MCF 10A (cell line): ENCODE measurements at regions of chr19 and their contacts with region 1.

Region 1: GRCh38 chr19:40777937-40778705 is at the start of gene RAB4B:
- DNase-seq: peak; percentile 100
- H3K4me3 Mint-ChIP-seq: peak within 1 kb of the TSS; percentile 83
- H3K27ac Mint-ChIP-seq: peak within 1 kb of the TSS; percentile 86
- H3K4me1 Mint-ChIP-seq: peaks cover 25% of the 10 kb centered on the region
- H3K27me3 Mint-ChIP-seq: no peaks in the 10 kb centered on the region
- CTCF ChIP-seq: no peak
- total RNA-seq, gene RAB4B: 10.1 and 13.2 TPM in 2 replicates

Region 2: DNA sequence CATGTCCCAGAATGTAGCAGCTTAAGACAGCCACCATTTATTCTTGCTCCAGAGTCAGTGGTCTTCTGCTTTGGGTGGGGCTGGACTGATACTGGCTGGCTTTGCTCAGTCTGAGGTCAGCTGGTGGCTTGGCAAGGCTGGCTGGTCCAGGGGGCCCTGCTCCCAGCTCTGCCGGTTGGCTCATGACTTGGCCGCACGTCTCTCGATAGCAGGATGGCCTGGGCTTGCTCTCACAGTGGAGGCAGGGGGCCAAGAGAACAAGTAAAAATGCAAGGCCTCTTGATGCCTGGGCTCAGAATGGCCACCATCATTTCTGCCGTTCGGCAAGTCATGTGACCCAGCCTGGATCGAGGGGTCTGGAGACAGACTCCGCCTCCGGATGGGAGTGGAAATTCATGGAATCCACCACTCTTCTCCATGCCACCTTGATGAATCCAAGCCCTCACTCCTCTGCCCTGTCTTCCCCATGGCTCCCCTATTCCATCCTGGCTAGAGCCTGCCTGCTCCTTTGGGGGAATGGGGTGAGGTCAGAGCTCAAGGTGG is 40.9 kb before region 1 on chr19:
- CTCF ChIA-PET with region 1: no interaction called
- POLR2A ChIA-PET with region 1: no interaction called
- intact Hi-C with region 1: no loop called
- DNase-seq: no peak
- H3K4me3 Mint-ChIP-seq: no peak overlapping the region
- H3K27ac Mint-ChIP-seq: no peak overlapping the region
- H3K4me1 Mint-ChIP-seq: peaks cover 7% of the 10 kb centered on the region
- H3K27me3 Mint-ChIP-seq: no peaks in the 10 kb centered on the region
- CTCF ChIP-seq: no peak

Region 3: DNA sequence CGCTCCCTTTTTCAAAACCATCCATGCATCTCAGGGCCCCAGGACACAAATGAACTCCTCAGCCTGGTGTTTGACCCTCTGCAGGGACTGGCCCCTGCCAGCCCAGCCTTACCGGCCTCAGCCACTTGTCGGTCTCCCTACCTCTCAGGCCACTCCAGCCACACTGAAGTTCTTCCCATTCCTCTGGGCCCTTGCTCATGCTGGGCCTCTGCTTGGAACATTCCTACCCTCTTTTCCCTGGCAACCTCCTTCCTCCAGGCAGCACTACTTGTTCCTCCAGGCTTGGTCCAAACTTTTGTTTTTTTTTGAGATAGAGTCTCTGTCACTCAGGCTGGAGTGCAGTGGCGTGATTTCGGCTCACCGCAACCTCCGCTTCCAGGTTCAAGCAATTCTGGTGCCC is 13.2 kb after region 1 on chr19:
- CTCF ChIA-PET with region 1: interaction called, 5 read pairs
- POLR2A ChIA-PET with region 1: interaction called, 15 read pairs
- intact Hi-C with region 1: no loop called
- DNase-seq: no peak
- H3K4me3 Mint-ChIP-seq: no peak overlapping the region
- H3K27ac Mint-ChIP-seq: no peak overlapping the region
- H3K4me1 Mint-ChIP-seq: peaks cover 14% of the 10 kb centered on the region
- H3K27me3 Mint-ChIP-seq: no peaks in the 10 kb centered on the region
- CTCF ChIP-seq: no peak

Region 4: GRCh38 chr19:40798223-40798996 is 20.3 kb after region 1 on chr19:
- CTCF ChIA-PET with region 1: interaction called, 5 read pairs
- POLR2A ChIA-PET with region 1: interaction called, 42 read pairs
- intact Hi-C with region 1: no loop called
- DNase-seq: peak; percentile 100
- H3K4me3 Mint-ChIP-seq: peak overlapping the region; percentile 86
- H3K27ac Mint-ChIP-seq: peak overlapping the region; percentile 93
- H3K4me1 Mint-ChIP-seq: peaks cover 29% of the 10 kb centered on the region
- H3K27me3 Mint-ChIP-seq: no peaks in the 10 kb centered on the region
- CTCF ChIP-seq: no peak